ENCODE measurements at regions of chr14 and their contacts with region 1.

Region 1: GRCh38 chr14:59055439-59056045 is 132.9 kb upstream of the DAAM1 start:
- DNase-seq: peak in 1 of 2 donors; percentile 31
- H3K4me3 ChIP-seq: no peak overlapping the region
- H3K27ac ChIP-seq: no peak overlapping the region
- H3K4me1 ChIP-seq: no peaks in the 10 kb centered on the region
- H3K27me3 ChIP-seq: no peaks in the 10 kb centered on the region
- CTCF ChIP-seq: peak; percentile 71 to 74

Region 2: DNA sequence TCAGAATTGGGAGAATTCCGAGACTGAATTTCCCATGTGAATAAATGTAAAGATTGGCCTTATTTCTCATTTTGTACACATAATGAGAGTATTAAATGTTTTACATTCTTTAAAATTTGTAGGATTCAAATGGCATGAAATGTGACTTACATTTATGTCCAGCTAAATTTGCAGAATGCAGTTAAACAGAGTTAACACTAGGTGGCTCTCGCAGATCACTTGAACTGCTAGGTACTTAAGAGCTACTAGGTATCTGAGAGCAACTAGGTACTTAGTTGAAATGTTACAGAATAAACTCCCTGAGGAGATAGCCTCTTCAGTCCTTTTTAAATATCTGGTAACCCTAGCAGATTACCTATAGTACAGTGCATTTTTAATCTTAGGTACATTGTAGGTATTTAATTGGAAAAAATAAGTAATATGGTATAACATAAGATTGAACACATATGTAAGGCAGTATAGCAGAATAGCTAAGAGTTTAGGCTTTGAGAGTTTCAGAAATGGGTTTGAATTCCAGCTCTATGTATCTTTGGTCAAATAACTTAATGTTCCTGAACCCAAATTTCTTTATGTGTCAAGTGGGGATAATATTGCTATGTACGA is 554.2 kb before region 1 on chr14:
- intact Hi-C with region 1: loop called (anchors 2 kb)
- DNase-seq: no peak
- H3K4me3 ChIP-seq: no peak overlapping the region
- H3K27ac ChIP-seq: no peak overlapping the region
- H3K4me1 ChIP-seq: no peaks in the 10 kb centered on the region
- H3K27me3 ChIP-seq: no peaks in the 10 kb centered on the region
- CTCF ChIP-seq: peak; percentile 85 to 89

Region 3: DNA sequence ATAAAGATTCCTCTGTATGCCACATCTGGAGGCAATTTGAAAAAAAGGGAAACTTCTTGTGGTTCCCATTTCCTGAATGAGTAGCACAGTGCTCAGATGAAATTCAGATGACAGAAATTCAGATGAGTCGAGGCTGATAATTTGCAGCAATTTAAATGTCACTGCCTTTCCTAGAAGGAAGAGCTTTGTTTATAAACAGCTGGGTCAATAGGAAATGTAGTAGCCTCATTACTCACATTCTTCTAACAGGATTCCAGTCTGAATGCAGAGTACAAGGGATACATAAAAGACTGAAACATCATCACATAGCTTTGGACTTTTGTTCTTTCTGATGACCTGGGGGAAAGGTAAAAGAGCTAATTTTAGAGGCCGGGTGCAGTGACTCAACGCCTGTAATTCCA is 429.1 kb before region 1 on chr14:
- intact Hi-C with region 1: no loop called
- DNase-seq: no peak
- H3K4me3 ChIP-seq: no peak overlapping the region
- H3K27ac ChIP-seq: no peak overlapping the region
- H3K4me1 ChIP-seq: no peaks in the 10 kb centered on the region
- H3K27me3 ChIP-seq: no peaks in the 10 kb centered on the region
- CTCF ChIP-seq: no peak

Measured in tibial artery (tissue), 4 donors.